PC-9 (cell line): ENCODE measurements at regions of chr22 and their contacts with region 1.

Region 1: GRCh38 chr22:31661851-31662656 is at the start of gene PISD:
- DNase-seq: peak; percentile 98 to 99
- H3K4me3 ChIP-seq: peak within 1 kb of the TSS; percentile 79
- H3K27ac ChIP-seq: peak within 1 kb of the TSS; percentile 98
- H3K4me1 ChIP-seq: peaks cover 28% of the 10 kb centered on the region
- H3K27me3 ChIP-seq: no peaks in the 10 kb centered on the region
- CTCF ChIP-seq: no peak
- total RNA-seq, gene PISD: 46.4 and 46.8 TPM in 2 replicates

Region 2: DNA sequence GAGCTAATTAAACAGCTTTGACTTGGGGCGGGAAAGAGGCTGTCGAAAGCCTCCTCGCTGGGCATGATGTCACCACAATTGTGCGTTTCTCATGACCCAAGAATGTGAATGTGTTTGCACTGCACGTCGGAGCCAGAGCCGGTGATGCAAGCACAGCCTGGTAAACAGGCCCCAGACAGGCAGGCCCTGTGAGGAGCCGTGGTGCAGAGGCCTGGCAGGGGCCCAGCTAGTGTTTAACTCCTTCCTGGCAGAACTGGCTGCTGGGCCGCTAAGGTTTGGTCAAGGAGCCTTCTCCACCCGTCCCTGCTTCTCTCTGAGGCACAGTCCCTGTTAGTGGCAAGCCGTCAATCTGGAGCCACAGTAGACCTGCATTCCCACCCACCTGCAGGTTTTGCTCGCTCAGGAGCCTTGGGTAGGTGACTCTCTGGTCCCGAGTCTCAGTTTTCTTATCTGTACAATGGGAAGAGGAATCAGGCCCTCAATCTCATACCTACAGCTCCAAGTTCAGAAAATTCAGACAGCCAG is 606.4 kb before region 1 on chr22:
- CTCF ChIA-PET with region 1: interaction called, 17 read pairs
- POLR2A ChIA-PET with region 1: no interaction called
- intact Hi-C with region 1: no loop called
- DNase-seq: peak; percentile 81 to 97
- H3K4me3 ChIP-seq: no peak overlapping the region
- H3K27ac ChIP-seq: no peak overlapping the region
- H3K4me1 ChIP-seq: peaks cover 14% of the 10 kb centered on the region
- H3K27me3 ChIP-seq: no peaks in the 10 kb centered on the region
- CTCF ChIP-seq: no peak

Region 3: GRCh38 chr22:31465307-31465706 is 196.7 kb before region 1 on chr22:
- CTCF ChIA-PET with region 1: no interaction called
- POLR2A ChIA-PET with region 1: no interaction called
- intact Hi-C with region 1: no loop called
- DNase-seq: no peak
- H3K4me3 ChIP-seq: no peak overlapping the region
- H3K27ac ChIP-seq: no peak overlapping the region
- H3K4me1 ChIP-seq: no peaks in the 10 kb centered on the region
- H3K27me3 ChIP-seq: no peaks in the 10 kb centered on the region
- CTCF ChIP-seq: no peak

Region 4: DNA sequence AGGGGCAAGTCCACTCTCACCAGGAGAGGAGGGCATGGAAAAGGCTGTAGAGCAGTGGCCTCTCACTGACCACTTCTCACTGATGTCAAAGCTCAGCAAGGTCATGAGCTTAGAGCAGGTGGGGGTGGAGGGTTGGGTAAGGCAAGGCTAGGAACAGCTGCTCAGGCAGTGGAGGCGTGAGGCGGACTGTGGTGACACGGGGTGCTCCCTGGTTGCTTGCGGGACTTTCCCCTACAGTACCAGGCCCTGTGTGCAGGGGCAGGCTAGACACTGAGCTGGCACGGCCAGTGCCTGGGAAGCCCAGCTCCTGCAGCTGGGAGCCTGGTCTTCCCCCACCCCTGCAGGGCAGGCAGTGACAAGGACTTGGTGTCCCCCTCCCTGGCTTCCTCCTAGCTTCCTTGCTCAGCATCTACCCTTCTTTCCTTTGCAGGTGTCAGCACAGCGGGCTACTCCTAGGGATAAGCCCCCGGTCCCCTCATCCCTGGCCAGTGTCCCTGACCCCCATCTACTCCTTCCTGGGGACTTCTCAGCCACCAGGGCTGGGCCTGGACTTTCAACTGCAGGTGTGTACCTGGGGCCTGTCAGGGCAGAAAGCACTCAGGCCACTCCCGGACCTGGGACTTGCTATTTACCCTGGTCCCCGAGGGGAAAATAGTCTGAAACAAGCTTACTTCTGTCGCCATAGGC is 45.6 kb before region 1 on chr22:
- CTCF ChIA-PET with region 1: no interaction called
- POLR2A ChIA-PET with region 1: no interaction called
- intact Hi-C with region 1: no loop called
- DNase-seq: no peak
- H3K4me3 ChIP-seq: no peak overlapping the region
- H3K27ac ChIP-seq: no peak overlapping the region
- H3K4me1 ChIP-seq: no peaks in the 10 kb centered on the region
- H3K27me3 ChIP-seq: no peaks in the 10 kb centered on the region
- CTCF ChIP-seq: no peak

Region 5: DNA sequence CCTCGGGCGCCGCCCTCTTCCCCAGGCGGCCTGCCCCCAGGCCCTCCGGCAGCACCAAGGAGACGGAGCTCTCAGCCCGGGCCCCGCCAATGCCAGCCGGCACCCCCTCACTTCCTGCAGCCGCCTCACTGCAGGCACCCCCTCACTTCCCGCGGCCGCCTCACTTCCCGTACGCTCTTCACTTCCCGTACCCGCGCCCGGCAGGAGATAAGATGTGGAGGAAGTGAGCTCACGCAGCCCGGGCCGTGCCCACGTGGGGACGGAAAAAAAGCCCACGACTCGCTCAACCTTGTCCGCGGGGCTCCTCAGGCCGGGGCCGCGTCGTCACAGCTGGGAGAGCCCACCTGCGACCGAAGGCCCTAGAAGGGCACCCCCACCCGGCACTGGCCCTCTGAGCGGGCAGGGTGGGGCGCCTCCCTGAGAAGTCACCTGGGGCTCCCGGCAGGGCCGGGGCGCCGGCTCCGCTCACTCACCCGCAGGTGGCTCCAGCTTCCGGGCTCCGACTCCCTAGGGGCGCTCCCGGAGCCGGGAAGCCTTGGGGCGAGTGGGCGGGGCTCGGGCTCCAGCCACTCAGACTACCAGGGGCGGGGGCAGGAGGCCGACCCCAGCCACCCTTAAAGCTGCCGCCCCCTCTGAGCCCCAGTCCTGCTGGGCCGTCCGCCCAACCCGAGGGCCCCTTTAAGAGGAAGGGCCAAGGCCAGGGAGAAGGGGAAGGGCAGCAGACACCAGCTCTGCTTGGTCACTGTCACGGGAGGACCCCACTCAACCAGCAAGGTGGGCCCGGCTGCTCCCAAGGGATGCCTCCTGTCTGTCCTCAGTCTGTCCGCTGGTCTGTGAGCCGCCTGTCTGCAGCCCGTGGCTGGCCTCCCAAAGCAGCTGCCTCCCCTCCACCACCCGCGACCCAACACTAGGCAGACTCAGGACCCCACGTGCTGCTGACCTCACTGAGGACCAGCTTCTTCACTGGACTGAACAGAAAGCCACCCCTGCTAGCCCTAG is 31.4 kb before region 1 on chr22:
- CTCF ChIA-PET with region 1: no interaction called
- POLR2A ChIA-PET with region 1: interaction called, 10 read pairs
- intact Hi-C with region 1: no loop called
- DNase-seq: peak; percentile 78 to 95
- H3K4me3 ChIP-seq: peak overlapping the region; percentile 84
- H3K27ac ChIP-seq: peak overlapping the region; percentile 51
- H3K4me1 ChIP-seq: peaks cover 39% of the 10 kb centered on the region
- H3K27me3 ChIP-seq: no peaks in the 10 kb centered on the region
- CTCF ChIP-seq: no peak; the same call in 1 of the 2 replicates

Region 6: GRCh38 chr22:31646186-31647089 is 15.6 kb before region 1 on chr22:
- CTCF ChIA-PET with region 1: interaction called, 6 read pairs
- POLR2A ChIA-PET with region 1: interaction called, 16 read pairs
- intact Hi-C with region 1: loop called (anchors 1 kb)
- DNase-seq: peak; percentile 70 to 99
- H3K4me3 ChIP-seq: no peak overlapping the region; the same call in 1 of the 2 replicates
- H3K27ac ChIP-seq: peak overlapping the region; percentile 98
- H3K4me1 ChIP-seq: peaks cover 45% of the 10 kb centered on the region
- H3K27me3 ChIP-seq: no peaks in the 10 kb centered on the region
- CTCF ChIP-seq: no peak

Region 7: GRCh38 chr22:31846161-31847115 is 184.4 kb after region 1 on chr22:
- CTCF ChIA-PET with region 1: no interaction called
- POLR2A ChIA-PET with region 1: no interaction called
- intact Hi-C with region 1: no loop called
- DNase-seq: no peak
- H3K4me3 ChIP-seq: no peak overlapping the region
- H3K27ac ChIP-seq: no peak overlapping the region
- H3K4me1 ChIP-seq: no peaks in the 10 kb centered on the region
- H3K27me3 ChIP-seq: no peaks in the 10 kb centered on the region
- CTCF ChIP-seq: peak; percentile 45

Region 8: GRCh38 chr22:31970490-31971444 is 308.7 kb after region 1 on chr22:
- CTCF ChIA-PET with region 1: interaction called, 11 read pairs
- POLR2A ChIA-PET with region 1: no interaction called
- intact Hi-C with region 1: loop called (anchors 1 kb)
- DNase-seq: peak; percentile 68 to 95
- H3K4me3 ChIP-seq: peak overlapping the region; percentile 76
- H3K27ac ChIP-seq: no peak overlapping the region
- H3K4me1 ChIP-seq: no peaks in the 10 kb centered on the region
- H3K27me3 ChIP-seq: no peaks in the 10 kb centered on the region
- CTCF ChIP-seq: peak; percentile 91

Region 9: GRCh38 chr22:32781695-32782094 is 1119.6 kb after region 1 on chr22:
- CTCF ChIA-PET with region 1: interaction called, 18 read pairs
- POLR2A ChIA-PET with region 1: interaction called, 5 read pairs
- intact Hi-C with region 1: no loop called
- DNase-seq: no peak
- H3K4me3 ChIP-seq: no peak overlapping the region
- H3K27ac ChIP-seq: no peak overlapping the region
- H3K4me1 ChIP-seq: peaks cover 47% of the 10 kb centered on the region
- H3K27me3 ChIP-seq: no peaks in the 10 kb centered on the region
- CTCF ChIP-seq: no peak